Posterior vena cava (tissue), 2 donors: ENCODE measurements at regions of chr9 and their contacts with region 1.

Region 1: GRCh38 chr9:109986521-109986991 is 206.6 kb downstream of the PALM2AKAP2 start:
- DNase-seq: no peak

Region 2: DNA sequence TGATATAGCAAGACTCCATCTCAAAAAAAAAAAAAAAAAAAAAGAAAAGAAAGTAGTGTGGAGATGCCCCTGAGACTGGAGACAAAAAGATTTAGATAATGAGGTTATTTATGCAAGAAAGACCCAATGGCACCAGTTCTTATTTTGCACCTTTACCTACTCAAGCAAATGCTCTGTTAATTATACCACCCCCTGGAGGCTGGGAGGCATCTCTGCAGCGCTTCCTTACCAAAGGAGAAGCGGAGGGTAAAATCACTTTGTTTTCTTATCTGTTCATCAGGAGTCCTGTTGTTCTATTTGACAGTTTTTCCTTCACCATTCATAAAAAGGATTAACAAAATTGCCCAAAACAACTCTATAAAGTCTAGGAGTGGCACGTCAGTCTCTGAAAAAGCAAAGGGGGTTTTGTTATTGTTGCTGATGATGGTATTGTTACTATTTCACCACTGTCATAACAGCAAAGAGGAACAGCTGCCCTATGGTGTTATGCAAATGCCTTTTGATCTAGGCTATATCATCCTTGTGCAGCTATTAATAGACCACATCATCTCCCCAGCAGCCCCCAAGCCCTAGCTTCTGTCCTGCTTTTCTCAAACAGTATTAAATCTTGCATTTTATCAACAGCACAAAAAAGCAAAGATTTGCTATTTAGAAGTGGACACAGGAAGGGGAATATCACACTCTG is 32.6 kb before region 1 on chr9:
- intact Hi-C with region 1: no loop called
- DNase-seq: no peak

Region 3: DNA sequence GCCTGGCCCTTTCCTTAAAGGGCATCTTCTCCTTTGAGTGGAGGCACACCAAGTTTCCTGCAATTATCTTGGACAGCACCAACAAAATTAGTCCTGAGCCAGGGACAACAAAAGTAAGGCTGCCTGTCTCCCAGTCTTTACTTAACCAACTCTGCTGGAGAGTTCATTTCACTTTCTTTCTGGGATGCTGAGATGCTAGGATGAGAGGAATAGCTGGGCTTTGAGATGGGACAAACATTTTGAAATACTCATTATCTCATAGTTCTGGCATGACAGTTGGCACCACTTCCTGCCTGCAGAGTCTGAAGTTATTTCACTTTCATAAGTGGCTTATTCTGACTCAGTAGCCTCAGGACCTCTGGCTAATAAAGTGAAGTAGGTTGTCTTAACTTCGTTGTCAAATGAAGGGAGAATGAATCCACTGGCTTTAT is 64.4 kb after region 1 on chr9:
- intact Hi-C with region 1: loop called in 1 of 2 experiments (anchors 2 kb)
- DNase-seq: no peak